H1 (cell line): ENCODE measurements at regions of chr9 and their contacts with region 1.

Region 1: GRCh38 chr9:131762356-131762932 is 22.6 kb upstream of the RAPGEF1 start:
- DNase-seq: peak; percentile 29 to 94
- H3K4me3 ChIP-seq: peak overlapping the region in 1 of 4 experiments; percentile 13; a peak in 1 of 8 replicates
- H3K27ac ChIP-seq: no peak overlapping the region
- H3K4me1 ChIP-seq: peaks cover 0 to 4% (median 0%) of the 10 kb centered on the region in 4 experiments; a peak in 2 of 7 replicates
- H3K27me3 ChIP-seq: no peaks in the 10 kb centered on the region
- CTCF ChIP-seq: peak; percentile 82 to 96 (median 84)
- EP300 ChIP-seq: no peak
- POLR2A ChIP-seq: no peak
- RAD21 ChIP-seq: peak; percentile 95 to 97

Region 2: GRCh38 chr9:131464354-131465000 is 298.0 kb before region 1 on chr9:
- CTCF ChIA-PET with region 1: no interaction called
- POLR2A ChIA-PET with region 1: no interaction called
- DNase-seq: no peak
- H3K4me3 ChIP-seq: no peak overlapping the region
- H3K27ac ChIP-seq: no peak overlapping the region
- H3K4me1 ChIP-seq: no peaks in the 10 kb centered on the region
- H3K27me3 ChIP-seq: no peaks in the 10 kb centered on the region
- CTCF ChIP-seq: no peak
- EP300 ChIP-seq: no peak
- POLR2A ChIP-seq: no peak
- RAD21 ChIP-seq: no peak

Region 3: DNA sequence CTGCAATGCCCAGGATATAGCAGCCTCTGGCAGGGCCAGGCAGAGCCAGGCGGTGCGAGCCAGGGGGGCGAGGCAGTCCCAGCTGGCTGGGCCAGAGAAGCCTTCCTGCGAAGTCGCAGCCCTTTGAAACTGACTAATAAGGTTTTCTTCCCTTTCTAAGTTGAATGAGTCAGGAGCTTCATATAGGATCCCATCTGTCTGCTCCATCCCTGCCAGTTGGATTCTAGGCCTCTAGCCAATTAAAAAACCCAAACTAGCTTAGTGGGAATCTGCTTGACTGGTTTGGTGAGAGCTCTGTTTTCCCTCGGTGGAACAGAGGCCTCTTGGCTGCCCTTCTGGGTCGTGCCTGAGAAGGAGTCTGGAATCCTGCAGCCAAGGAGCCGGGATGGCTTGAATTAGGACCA is 47.5 kb after region 1 on chr9:
- CTCF ChIA-PET with region 1: interaction called, 11 read pairs
- POLR2A ChIA-PET with region 1: no interaction called
- DNase-seq: no peak
- H3K4me3 ChIP-seq: no peak overlapping the region
- H3K27ac ChIP-seq: no peak overlapping the region
- H3K4me1 ChIP-seq: peaks cover 6 to 27% (median 20%) of the 10 kb centered on the region in 4 experiments
- H3K27me3 ChIP-seq: no peaks in the 10 kb centered on the region
- CTCF ChIP-seq: no peak
- EP300 ChIP-seq: no peak
- POLR2A ChIP-seq: no peak
- RAD21 ChIP-seq: no peak